H1 (cell line): ENCODE measurements at regions of chr7 and their contacts with region 1.

Region 1: DNA sequence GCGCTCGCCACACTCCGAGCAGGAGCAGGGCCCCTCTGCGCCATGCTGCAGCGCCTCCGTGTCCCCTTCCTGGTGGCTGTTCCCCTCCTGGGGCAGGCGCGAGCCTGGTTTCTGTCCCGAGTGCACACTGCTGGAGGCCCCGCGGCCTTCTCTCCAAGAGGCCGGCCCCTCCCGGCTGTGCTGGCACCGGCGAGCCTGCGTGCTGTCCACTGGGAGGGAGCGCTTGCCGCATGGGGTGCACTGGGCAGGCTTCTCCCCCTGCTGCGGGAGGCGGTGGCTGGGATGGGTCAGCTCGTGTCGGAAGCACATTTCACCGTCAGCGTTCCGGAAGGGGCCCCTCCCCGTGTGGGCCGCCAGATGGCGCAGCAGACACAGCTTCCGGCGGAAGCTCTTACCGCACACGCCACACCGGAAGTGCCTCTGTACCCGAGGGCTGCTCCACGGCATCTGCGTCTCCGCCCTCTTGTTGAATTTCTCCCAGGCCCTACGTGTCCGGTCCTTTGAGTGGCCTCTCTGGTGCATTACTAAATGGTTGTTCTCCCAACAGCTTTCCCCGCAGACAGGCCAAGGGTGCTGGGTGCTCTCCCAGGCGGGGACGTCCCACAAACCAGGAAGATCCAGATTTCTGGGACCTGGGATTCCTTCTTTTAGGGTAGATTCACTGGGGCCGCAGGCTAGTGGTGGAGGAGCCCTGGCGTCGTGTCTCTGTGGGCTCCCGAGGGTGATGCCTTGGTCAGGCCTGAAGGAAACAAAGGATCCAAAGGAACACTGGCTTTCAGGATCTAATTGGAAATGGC is 18.7 kb downstream of the ZNF786 start:
- DNase-seq: peak; percentile 81 to 91
- H3K4me3 ChIP-seq: no peak overlapping the region
- H3K27ac ChIP-seq: peak overlapping the region; percentile 13; the same call in 1 of the 2 replicates
- H3K4me1 ChIP-seq: no peaks in the 10 kb centered on the region; a peak in 1 of 7 replicates
- H3K27me3 ChIP-seq: no peaks in the 10 kb centered on the region
- CTCF ChIP-seq: peak; percentile 86 to 91 (median 86)
- EP300 ChIP-seq: no peak
- POLR2A ChIP-seq: peak in 1 of 2 experiments; percentile 14; a peak in 1 of 3 replicates
- RAD21 ChIP-seq: peak; percentile 72 to 75

Region 2: DNA sequence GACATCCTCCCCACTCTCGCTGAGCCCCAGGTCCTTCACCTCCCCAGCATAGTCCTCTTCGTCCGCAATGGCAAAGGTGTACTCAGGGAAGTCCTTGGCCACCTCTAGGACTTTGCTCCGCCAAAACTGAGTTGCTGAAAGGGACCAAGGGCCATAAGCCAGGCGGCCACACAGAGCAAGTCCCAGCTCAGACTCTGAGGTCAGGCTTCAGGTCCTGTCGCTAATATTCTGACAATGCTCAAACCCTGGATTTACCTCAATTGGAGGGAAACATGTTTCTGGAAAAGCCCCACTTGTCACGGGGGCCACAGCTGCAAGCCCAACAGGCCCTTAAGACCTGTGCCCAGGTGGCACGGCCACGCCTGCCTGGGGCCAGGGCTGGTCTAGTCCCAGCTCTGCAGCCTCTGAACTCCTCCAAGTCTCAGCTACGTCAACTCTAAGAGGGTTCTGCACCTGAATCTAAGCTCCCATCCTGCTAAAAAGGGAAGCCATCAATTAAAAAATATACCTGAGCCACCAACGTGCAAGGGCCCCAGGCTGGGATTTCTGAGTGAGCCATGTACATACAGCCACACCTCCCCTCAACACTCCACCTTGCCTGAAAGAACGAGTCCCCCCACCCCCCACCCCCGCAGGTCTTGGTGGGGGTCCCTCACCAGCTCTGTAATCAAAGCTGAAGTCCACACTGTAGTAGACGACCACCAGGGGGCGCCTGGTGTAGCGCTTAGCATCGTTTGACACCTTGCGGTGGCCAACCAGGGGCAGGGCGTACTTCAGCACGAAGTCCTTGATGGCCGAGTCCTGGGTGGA is 66.4 kb before region 1 on chr7:
- CTCF ChIA-PET with region 1: interaction called, 22 read pairs
- POLR2A ChIA-PET with region 1: interaction called, 3 read pairs
- DNase-seq: peak; percentile 56 to 94
- H3K4me3 ChIP-seq: no peak overlapping the region
- H3K27ac ChIP-seq: 0 out of 2 replicates have a peak overlapping the region, but pooled peaks have one; percentile 12
- H3K4me1 ChIP-seq: no peaks in the 10 kb centered on the region; a peak in 2 of 7 replicates
- H3K27me3 ChIP-seq: no peaks in the 10 kb centered on the region
- CTCF ChIP-seq: peak; percentile 81 to 95 (median 86)
- EP300 ChIP-seq: peak in 1 of 2 experiments; percentile 12; a peak in 1 of 3 replicates
- POLR2A ChIP-seq: no peak
- RAD21 ChIP-seq: peak; percentile 59 to 72

Region 3: DNA sequence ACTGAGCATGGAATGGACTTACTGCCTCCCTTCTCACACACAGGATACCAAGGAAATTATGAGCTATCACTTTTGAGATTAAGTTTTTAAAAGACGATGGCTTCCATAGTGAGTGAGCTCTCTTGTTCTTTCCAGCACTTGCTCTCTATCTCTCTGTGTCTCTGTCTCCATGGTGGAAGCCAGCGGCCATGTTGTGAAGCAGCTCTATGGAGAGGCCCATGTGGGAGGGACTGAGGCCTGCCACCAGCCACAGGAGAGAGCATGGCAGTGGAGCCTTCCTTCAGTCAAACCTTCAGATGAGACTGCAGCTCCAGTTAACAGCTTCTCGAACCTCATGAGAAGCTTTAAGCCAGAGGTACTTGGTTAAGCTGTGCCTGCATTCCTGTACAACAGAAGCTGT is 23.0 kb before region 1 on chr7:
- CTCF ChIA-PET with region 1: interaction called, 10 read pairs
- POLR2A ChIA-PET with region 1: interaction called, 4 read pairs
- DNase-seq: no peak
- H3K4me3 ChIP-seq: no peak overlapping the region
- H3K27ac ChIP-seq: no peak overlapping the region
- H3K4me1 ChIP-seq: no peaks in the 10 kb centered on the region
- H3K27me3 ChIP-seq: no peaks in the 10 kb centered on the region
- CTCF ChIP-seq: no peak
- EP300 ChIP-seq: no peak
- POLR2A ChIP-seq: no peak
- RAD21 ChIP-seq: no peak

Region 4: DNA sequence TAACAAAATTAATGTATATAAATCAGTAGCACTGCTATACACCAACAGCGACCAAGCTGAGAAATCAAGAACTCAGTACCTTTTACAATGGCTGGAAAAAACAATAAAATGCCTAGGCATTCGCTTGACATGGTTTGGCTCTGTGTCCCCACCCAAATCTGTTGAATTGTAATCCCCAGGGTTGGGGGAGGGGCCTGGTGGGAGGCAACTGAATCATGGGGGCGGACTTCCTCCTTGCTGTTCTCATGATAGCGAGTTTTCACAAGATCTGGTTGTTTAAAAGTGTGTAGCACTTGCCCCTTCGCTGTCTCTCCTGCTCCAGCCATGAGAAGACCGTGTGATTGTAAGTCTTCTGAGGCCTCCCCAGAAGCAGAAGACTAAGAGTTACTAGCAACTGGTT is 10.1 kb after region 1 on chr7:
- CTCF ChIA-PET with region 1: interaction called, 10 read pairs
- POLR2A ChIA-PET with region 1: interaction called, 3 read pairs
- DNase-seq: no peak
- H3K4me3 ChIP-seq: no peak overlapping the region
- H3K27ac ChIP-seq: no peak overlapping the region
- H3K4me1 ChIP-seq: no peaks in the 10 kb centered on the region
- H3K27me3 ChIP-seq: no peaks in the 10 kb centered on the region
- CTCF ChIP-seq: no peak
- EP300 ChIP-seq: no peak
- POLR2A ChIP-seq: no peak
- RAD21 ChIP-seq: no peak

Region 5: GRCh38 chr7:149125863-149126661 is 54.2 kb after region 1 on chr7 and contains the start of gene ZNF425:
- CTCF ChIA-PET with region 1: interaction called, 19 read pairs
- POLR2A ChIA-PET with region 1: interaction called, 5 read pairs
- DNase-seq: peak; percentile 73 to 97
- H3K4me3 ChIP-seq: peak within 1 kb of the TSS; percentile 83 to 95 (median 88)
- H3K27ac ChIP-seq: peak within 1 kb of the TSS; percentile 85
- H3K4me1 ChIP-seq: peaks cover 0 to 12% (median 3%) of the 10 kb centered on the region in 4 experiments; a peak in 3 of 7 replicates
- H3K27me3 ChIP-seq: no peaks in the 10 kb centered on the region
- CTCF ChIP-seq: peak; percentile 84 to 98 (median 85)
- EP300 ChIP-seq: peak in 1 of 2 experiments; percentile 64; a peak in 2 of 3 replicates
- POLR2A ChIP-seq: peak; percentile 95
- RAD21 ChIP-seq: peak; percentile 56 to 60
- total RNA-seq, gene ZNF425: 4.0 and 6.1 TPM in 2 replicates